ENCODE measurements at regions of chr18 and their contacts with region 1.

Region 1: DNA sequence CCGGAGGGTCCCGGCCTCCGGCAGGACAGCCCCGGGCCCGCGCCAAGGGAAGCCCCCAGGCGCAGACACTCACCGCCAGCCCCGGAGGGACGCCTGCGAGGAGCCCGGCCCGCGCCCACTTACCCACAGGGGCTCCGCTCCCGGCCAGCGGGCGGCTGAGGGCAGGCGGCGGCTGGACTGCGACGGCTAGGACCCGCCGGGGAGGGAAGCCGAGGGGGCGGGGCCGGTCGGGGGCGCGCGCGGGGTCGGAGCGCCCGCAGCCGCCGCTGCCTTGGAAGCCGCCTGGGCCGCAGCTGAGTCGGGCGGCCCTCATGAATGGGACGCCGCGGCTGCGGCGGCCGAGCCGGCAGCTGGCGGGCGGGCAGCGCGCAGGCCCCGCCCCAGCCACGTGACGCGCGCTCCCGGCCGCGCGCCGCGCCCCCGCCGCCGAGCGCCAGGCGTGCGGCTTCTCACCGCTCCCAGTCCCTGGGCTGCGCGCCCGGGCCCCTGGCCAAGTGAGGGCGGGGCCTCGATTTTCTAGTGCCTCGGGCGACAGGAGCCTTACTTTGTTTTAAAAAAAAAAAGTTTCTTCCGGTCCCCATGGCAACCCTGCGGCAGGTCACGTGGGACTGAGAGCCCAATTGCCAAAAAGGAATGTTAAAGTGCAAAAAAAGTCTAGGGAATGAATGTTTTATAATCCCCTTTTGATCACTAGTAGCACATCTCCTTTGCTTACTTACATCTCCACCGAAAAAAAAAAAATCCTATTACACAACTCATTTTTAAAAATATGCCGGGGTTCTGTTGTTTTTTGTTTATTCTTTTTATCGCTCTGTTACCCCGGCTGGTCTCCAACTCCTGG is at the start of gene LPIN2:
- DNase-seq: peak; percentile 96 to 98 (median 98)
- ATAC-seq: peak; percentile 92
- H3K4me3 ChIP-seq: peak within 1 kb of the TSS; percentile 61
- H3K4me3 Mint-ChIP-seq: peak within 1 kb of the TSS; percentile 93 to 99 (median 95)
- H3K27ac ChIP-seq: peak within 1 kb of the TSS; percentile 84
- H3K27ac Mint-ChIP-seq: peak within 1 kb of the TSS; percentile 91 to 98 (median 95)
- H3K4me1 ChIP-seq: peaks cover 8 to 61% of the 10 kb centered on the region in 2 donors
- H3K4me1 Mint-ChIP-seq: peaks cover 56 to 79% (median 74%) of the 10 kb centered on the region in 7 donors
- H3K27me3 ChIP-seq: no peaks in the 10 kb centered on the region
- H3K27me3 Mint-ChIP-seq: no peaks in the 10 kb centered on the region
- total RNA-seq, gene LPIN2: 58.8 to 133 (median 73.6) TPM

Region 2: DNA sequence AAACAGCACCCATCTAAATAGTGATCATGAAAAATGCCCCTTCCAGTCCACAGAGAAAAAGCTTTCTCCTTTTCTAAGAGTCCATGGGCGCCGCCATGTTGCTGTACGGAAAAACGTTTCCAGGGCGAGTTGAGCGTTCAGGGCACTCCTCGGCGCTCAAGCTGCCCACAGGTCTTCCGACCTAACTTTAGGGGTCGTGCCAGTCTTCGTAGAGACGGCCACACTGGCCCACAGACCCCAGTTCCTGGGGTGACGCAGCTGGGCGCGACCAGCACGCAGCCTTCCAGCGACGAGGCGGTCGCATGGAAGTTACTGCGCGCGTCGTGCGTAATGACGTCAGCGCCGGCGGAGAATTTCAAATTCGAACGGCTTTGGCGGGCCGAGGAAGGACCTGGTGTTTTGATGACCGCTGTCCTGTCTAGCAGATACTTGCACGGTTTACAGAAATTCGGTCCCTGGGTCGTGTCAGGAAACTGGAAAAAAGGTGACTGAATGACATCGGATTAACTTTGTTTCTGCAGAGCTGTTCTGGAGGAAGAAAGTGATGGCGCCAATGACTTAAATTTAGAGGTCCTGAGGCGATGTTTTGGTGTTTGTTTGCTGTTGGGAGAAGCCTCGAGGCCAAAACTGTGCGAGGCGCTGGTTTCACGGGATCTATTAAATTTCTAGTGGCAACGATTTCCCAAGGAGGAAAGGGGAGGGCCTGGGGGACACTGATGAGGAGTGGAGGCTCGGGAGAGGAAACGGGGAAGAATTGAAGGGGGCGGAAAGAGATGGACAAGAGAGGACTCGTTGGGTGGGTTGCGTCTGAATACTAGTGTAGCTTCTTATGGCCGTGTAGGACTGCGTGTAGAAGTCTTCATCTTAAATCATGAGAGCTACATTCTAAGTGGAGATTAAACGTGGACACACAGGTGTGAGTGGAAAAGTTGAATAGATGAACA is 441.7 kb before region 1 on chr18 and contains the starts of genes METTL4 and NDC80:
- CTCF ChIA-PET with region 1: no interaction called
- POLR2A ChIA-PET with region 1: no interaction called
- intact Hi-C with region 1: loop called in 1 of 2 experiments (anchors 1 kb)
- DNase-seq: peak; percentile 70 to 90 (median 82)
- ATAC-seq: peak; percentile 87
- H3K4me3 ChIP-seq: peak within 1 kb of the TSS; percentile 88
- H3K4me3 Mint-ChIP-seq: peak within 1 kb of the TSS; percentile 96 to 100 (median 99)
- H3K27ac ChIP-seq: peak within 1 kb of the TSS; percentile 97
- H3K27ac Mint-ChIP-seq: peak within 1 kb of the TSS; percentile 98 to 100 (median 100)
- H3K4me1 ChIP-seq: peaks cover 10 to 13% of the 10 kb centered on the region in 2 donors
- H3K4me1 Mint-ChIP-seq: peaks cover 38 to 63% (median 59%) of the 10 kb centered on the region in 7 donors
- H3K27me3 ChIP-seq: no peaks in the 10 kb centered on the region
- H3K27me3 Mint-ChIP-seq: no peaks in the 10 kb centered on the region
- total RNA-seq, gene METTL4: 13.8 to 32.5 (median 22.8) TPM
- total RNA-seq, gene NDC80: 2.4 to 53.6 (median 2.7) TPM

Region 3: GRCh38 chr18:2994603-2995432 is 18.4 kb before region 1 on chr18:
- CTCF ChIA-PET with region 1: interaction called, 11 read pairs
- POLR2A ChIA-PET with region 1: interaction called, 25 read pairs
- intact Hi-C with region 1: loop called (anchors 1 kb)
- DNase-seq: peak; percentile 57 to 83 (median 77)
- ATAC-seq: peak; percentile 92
- H3K4me3 ChIP-seq: peak overlapping the region; percentile 35
- H3K4me3 Mint-ChIP-seq: peak overlapping the region; percentile 41 to 80 (median 68)
- H3K27ac ChIP-seq: peak overlapping the region; percentile 62
- H3K27ac Mint-ChIP-seq: peak overlapping the region; percentile 54 to 91 (median 84)
- H3K4me1 ChIP-seq: peaks cover 38 to 47% of the 10 kb centered on the region in 2 donors
- H3K4me1 Mint-ChIP-seq: peaks cover 48 to 87% (median 83%) of the 10 kb centered on the region in 7 donors
- H3K27me3 ChIP-seq: no peaks in the 10 kb centered on the region
- H3K27me3 Mint-ChIP-seq: no peaks in the 10 kb centered on the region

Region 4: GRCh38 chr18:3002732-3003131 is 10.5 kb before region 1 on chr18:
- CTCF ChIA-PET with region 1: interaction called, 5 read pairs
- POLR2A ChIA-PET with region 1: interaction called, 25 read pairs
- intact Hi-C with region 1: loop called in 1 of 2 experiments (anchors 1 kb)
- DNase-seq: no peak
- ATAC-seq: no peak
- H3K4me3 ChIP-seq: no peak overlapping the region
- H3K4me3 Mint-ChIP-seq: peak overlapping the region in 3 of 10 donors; percentile 1 to 23 (median 20)
- H3K27ac ChIP-seq: peak overlapping the region; percentile 14
- H3K27ac Mint-ChIP-seq: peak overlapping the region in 8 of 9 donors; percentile 34 to 98 (median 80)
- H3K4me1 ChIP-seq: peaks cover 14 to 18% of the 10 kb centered on the region in 2 donors
- H3K4me1 Mint-ChIP-seq: peaks cover 28 to 89% (median 79%) of the 10 kb centered on the region in 7 donors
- H3K27me3 ChIP-seq: no peaks in the 10 kb centered on the region
- H3K27me3 Mint-ChIP-seq: no peaks in the 10 kb centered on the region

Region 5: GRCh38 chr18:3037423-3037915 is 24.3 kb after region 1 on chr18:
- CTCF ChIA-PET with region 1: no interaction called
- POLR2A ChIA-PET with region 1: interaction called, 3 read pairs
- intact Hi-C with region 1: loop called in 1 of 2 experiments (anchors 1 kb)
- DNase-seq: no peak
- ATAC-seq: peak; percentile 77
- H3K4me3 ChIP-seq: no peak overlapping the region
- H3K4me3 Mint-ChIP-seq: peak overlapping the region in 1 of 10 donors; percentile 28
- H3K27ac ChIP-seq: no peak overlapping the region
- H3K27ac Mint-ChIP-seq: peak overlapping the region in 4 of 9 donors; percentile 12 to 79 (median 30)
- H3K4me1 ChIP-seq: peaks cover 0 to 4% of the 10 kb centered on the region in 2 donors
- H3K4me1 Mint-ChIP-seq: peaks cover 1 to 36% (median 10%) of the 10 kb centered on the region in 7 donors
- H3K27me3 ChIP-seq: no peaks in the 10 kb centered on the region
- H3K27me3 Mint-ChIP-seq: no peaks in the 10 kb centered on the region

Region 6: DNA sequence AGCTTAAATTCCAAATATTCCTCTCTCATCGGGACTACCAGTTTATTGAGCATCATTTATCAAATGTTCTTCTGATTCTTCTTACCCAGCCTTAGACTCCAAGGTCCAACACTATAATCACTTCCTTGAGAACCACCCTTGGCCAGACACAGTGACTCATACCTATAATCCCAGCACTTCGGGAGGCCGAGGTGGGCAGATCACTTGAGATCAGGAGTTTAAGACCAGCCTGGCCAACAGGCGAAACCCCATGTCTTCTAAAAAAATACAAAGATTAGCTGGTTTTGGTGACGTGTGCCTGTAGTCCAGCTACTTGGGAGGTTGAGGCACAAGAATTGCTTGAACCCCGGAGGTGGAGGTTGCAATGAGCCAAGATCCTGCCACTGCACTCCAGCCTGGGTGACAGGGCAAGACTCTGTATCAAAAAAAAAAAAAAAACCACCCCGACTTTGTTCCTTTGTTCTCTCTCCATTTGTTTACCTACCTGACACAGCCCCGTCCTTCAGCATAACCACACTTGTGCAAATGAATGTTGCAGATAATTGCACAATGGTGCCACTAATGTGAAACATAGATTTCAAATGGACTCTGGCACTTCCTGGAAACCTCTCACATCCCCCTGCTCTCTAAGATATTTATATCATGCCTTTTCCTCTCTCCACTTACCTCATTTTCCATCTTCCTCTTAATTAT is 38.7 kb after region 1 on chr18:
- CTCF ChIA-PET with region 1: interaction called, 3 read pairs
- POLR2A ChIA-PET with region 1: interaction called, 11 read pairs
- intact Hi-C with region 1: loop called in 1 of 2 experiments (anchors 2 kb)
- DNase-seq: no peak
- ATAC-seq: peak; percentile 38
- H3K4me3 ChIP-seq: peak overlapping the region; percentile 10
- H3K4me3 Mint-ChIP-seq: peak overlapping the region in 9 of 10 donors; percentile 0 to 76 (median 42)
- H3K27ac ChIP-seq: no peak overlapping the region
- H3K27ac Mint-ChIP-seq: peak overlapping the region; percentile 3 to 75 (median 51)
- H3K4me1 ChIP-seq: peaks cover 5 to 26% of the 10 kb centered on the region in 2 donors
- H3K4me1 Mint-ChIP-seq: peaks cover 27 to 46% (median 40%) of the 10 kb centered on the region in 7 donors
- H3K27me3 ChIP-seq: no peaks in the 10 kb centered on the region
- H3K27me3 Mint-ChIP-seq: no peaks in the 10 kb centered on the region

Region 7: GRCh38 chr18:3261371-3262246 is 248.4 kb after region 1 on chr18 and contains the start of gene MYL12B:
- CTCF ChIA-PET with region 1: no interaction called
- POLR2A ChIA-PET with region 1: interaction called, 3 read pairs
- intact Hi-C with region 1: loop called (anchors 2 to 5 kb)
- DNase-seq: peak; percentile 72 to 88 (median 84)
- ATAC-seq: peak; percentile 87
- H3K4me3 ChIP-seq: peak within 1 kb of the TSS; percentile 81
- H3K4me3 Mint-ChIP-seq: peak within 1 kb of the TSS; percentile 87 to 100 (median 96)
- H3K27ac ChIP-seq: peak within 1 kb of the TSS; percentile 96
- H3K27ac Mint-ChIP-seq: peak within 1 kb of the TSS; percentile 95 to 100 (median 99)
- H3K4me1 ChIP-seq: peaks cover 54 to 66% of the 10 kb centered on the region in 2 donors
- H3K4me1 Mint-ChIP-seq: peaks cover 48 to 87% (median 83%) of the 10 kb centered on the region in 7 donors
- H3K27me3 ChIP-seq: no peaks in the 10 kb centered on the region
- H3K27me3 Mint-ChIP-seq: no peaks in the 10 kb centered on the region
- total RNA-seq, gene MYL12B: 140 to 300 (median 169) TPM